ENCODE measurements at regions of chr20 and their contacts with region 1.

Region 1: GRCh38 chr20:32819992-32820710 is 397 bp downstream of the MAPRE1 start:
- DNase-seq: peak; percentile 74 to 97 (median 90)
- ATAC-seq: peak; percentile 76 to 77
- H3K4me3 Mint-ChIP-seq: peak overlapping the region; percentile 88 to 98 (median 94)
- H3K27ac Mint-ChIP-seq: peak overlapping the region; percentile 87 to 99 (median 96)
- H3K4me1 Mint-ChIP-seq: peaks cover 24 to 53% (median 48%) of the 10 kb centered on the region in 4 donors
- H3K27me3 Mint-ChIP-seq: no peaks in the 10 kb centered on the region

Region 2: GRCh38 chr20:32796981-32797451 is 23.1 kb before region 1 on chr20:
- POLR2A ChIA-PET with region 1: interaction called, 10 read pairs
- DNase-seq: no peak
- ATAC-seq: no peak
- H3K4me3 Mint-ChIP-seq: peak overlapping the region in 6 of 10 donors; percentile 40 to 65 (median 46)
- H3K27ac Mint-ChIP-seq: peak overlapping the region; percentile 2 to 95 (median 80)
- H3K4me1 Mint-ChIP-seq: peaks cover 21 to 53% (median 49%) of the 10 kb centered on the region in 4 donors
- H3K27me3 Mint-ChIP-seq: no peaks in the 10 kb centered on the region

Region 3: GRCh38 chr20:32832664-32833063 is 12.5 kb after region 1 on chr20:
- POLR2A ChIA-PET with region 1: interaction called, 20 read pairs
- DNase-seq: peak in 4 of 10 donors; percentile 26 to 65 (median 32)
- ATAC-seq: peak; percentile 67 to 68
- H3K4me3 Mint-ChIP-seq: peak overlapping the region; percentile 45 to 83 (median 70)
- H3K27ac Mint-ChIP-seq: peak overlapping the region; percentile 40 to 95 (median 88)
- H3K4me1 Mint-ChIP-seq: peaks cover 28 to 81% (median 65%) of the 10 kb centered on the region in 4 donors
- H3K27me3 Mint-ChIP-seq: no peaks in the 10 kb centered on the region

Region 4: GRCh38 chr20:32841174-32841573 is 21.0 kb after region 1 on chr20:
- POLR2A ChIA-PET with region 1: interaction called, 10 read pairs
- DNase-seq: no peak
- ATAC-seq: peak; percentile 38 to 52
- H3K4me3 Mint-ChIP-seq: peak overlapping the region in 8 of 10 donors; percentile 1 to 75 (median 62)
- H3K27ac Mint-ChIP-seq: peak overlapping the region; percentile 73 to 92 (median 88)
- H3K4me1 Mint-ChIP-seq: peaks cover 23 to 67% (median 65%) of the 10 kb centered on the region in 4 donors
- H3K27me3 Mint-ChIP-seq: no peaks in the 10 kb centered on the region

Measured in naive thymus-derived CD8-positive, alpha-beta T cell (primary cell).